ENCODE measurements at regions of chr5 and their contacts with region 1.

Region 1: GRCh38 chr5:71782771-71783770 is 64.0 kb downstream of the CARTPT start:
- DNase-seq: peak; percentile 63 to 91
- H3K4me3 ChIP-seq: no peak overlapping the region
- H3K4me1 ChIP-seq: peaks cover 2% of the 10 kb centered on the region; the same call in 1 of the 2 replicates
- H3K27me3 ChIP-seq: no peaks in the 10 kb centered on the region

Region 2: GRCh38 chr5:71569748-71570509 is 213.1 kb before region 1 on chr5:
- in situ Hi-C with region 1: no loop called
- DNase-seq: no peak
- H3K4me3 ChIP-seq: no peak overlapping the region
- H3K4me1 ChIP-seq: no peaks in the 10 kb centered on the region
- H3K27me3 ChIP-seq: no peaks in the 10 kb centered on the region

Region 3: GRCh38 chr5:72018146-72018803 is 235.2 kb after region 1 on chr5:
- in situ Hi-C with region 1: loop called (anchors 25 kb)
- DNase-seq: peak; percentile 43 to 74
- H3K4me3 ChIP-seq: no peak overlapping the region
- H3K4me1 ChIP-seq: peaks cover 11% of the 10 kb centered on the region
- H3K27me3 ChIP-seq: no peaks in the 10 kb centered on the region

Region 4: DNA sequence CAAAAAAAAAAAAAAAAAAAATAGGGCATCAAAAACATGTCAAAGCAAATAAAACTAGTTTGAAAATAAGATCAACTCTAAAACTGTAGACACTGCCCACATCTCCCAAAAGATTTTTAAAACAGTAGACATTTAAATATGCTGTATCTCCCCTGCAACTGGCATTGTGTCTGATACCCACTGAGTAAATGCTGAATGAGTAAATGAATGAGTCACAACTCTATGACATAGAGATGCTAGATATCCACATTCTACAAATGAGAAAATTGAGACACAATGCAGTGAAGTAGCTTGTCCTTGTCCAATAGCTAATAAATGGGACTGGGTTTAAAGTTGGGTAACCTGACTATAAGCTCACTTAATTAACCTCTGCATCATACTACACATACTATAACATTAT is 310.1 kb after region 1 on chr5:
- in situ Hi-C with region 1: no loop called
- DNase-seq: no peak
- H3K4me3 ChIP-seq: no peak overlapping the region
- H3K4me1 ChIP-seq: no peaks in the 10 kb centered on the region
- H3K27me3 ChIP-seq: no peaks in the 10 kb centered on the region

Region 5: DNA sequence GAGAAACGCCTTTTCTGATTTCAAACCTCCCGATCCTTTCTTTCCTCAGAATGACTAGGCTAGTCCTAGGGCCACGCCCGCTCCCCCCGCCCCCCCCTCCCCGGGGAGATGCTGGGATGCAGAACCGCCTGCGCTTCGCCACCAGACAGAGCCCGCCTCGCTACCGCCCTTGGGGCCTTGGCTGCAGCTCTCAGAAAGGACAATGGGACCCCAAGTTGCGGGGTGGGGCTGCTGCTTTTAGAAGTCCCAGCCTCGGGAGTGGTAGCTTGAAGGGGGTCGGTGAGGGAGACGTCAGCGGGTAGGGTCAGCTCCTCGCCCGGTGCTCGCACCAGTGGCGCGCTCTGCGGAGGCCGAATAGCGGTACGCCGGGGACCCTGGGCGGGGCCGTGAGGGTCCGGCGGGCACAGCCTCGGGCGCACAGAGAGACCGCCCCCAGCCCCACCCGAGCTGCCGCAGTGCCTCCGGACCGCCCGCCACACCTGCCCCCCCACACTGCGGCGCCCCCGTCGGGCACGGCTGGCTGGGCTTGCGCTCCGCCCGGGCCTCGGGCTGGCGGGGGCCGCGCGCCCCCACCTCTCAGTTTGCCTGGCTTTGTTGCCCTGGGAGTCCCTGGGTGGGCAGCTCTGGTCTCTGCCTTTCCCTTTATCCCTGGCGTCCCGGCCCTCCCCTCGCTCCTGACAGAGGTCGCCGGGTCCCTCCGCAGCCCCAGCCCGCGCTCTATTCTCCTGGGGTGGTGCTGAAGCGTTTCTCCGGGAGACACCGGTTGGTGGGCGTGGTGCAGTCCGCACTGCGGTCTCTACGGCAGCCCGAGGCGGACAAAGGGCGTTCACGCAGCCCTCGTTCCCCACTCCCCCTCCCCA is 325.4 kb after region 1 on chr5:
- in situ Hi-C with region 1: loop called (anchors 25 kb)
- DNase-seq: peak; percentile 67 to 92
- H3K4me3 ChIP-seq: peak overlapping the region; percentile 75
- H3K4me1 ChIP-seq: peaks cover 30% of the 10 kb centered on the region
- H3K27me3 ChIP-seq: no peaks in the 10 kb centered on the region

Region 6: DNA sequence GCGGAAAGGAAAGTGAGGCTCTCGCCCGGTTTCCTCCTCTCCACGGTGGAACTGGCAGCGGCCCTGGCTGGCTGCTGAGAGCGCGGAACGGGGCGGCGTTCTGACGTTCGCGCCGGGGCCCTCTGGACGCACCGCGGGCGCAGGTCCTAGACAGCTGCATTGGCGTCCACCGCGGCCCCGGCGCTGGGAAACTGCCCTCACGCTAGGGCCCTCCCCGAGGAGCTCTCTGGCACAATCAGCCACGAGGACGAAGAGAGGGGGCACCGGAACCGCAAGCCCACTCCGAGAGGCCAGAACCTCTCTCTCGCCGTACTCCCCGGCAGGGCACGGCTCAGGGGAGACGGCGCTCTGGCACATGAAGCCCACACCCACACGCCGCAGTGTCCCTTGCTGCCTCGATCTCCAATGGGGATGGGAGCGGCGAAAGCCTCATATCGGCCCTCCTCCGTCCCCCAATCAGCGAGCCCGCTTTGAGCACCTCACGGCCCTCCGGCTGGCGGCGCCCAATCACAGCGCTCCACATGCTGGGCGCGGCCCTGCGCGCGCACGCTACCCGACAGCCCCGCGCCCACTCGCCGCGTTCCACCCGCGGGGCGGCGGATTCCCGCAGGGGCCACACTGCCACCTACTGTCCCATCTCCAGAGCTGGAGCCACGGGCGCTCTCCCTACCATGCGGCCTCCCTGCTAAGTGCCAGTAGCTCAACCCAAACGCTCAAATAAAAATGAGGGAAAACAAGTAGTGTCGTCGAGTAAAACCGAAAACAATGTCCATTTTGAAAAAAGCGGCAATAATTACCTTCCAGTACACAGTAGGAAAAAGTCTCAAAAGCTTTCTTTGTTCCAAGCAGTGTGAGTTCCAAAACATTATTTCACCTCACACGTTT is 525.1 kb after region 1 on chr5:
- in situ Hi-C with region 1: loop called (anchors 5 kb)
- DNase-seq: peak; percentile 92 to 97
- H3K4me3 ChIP-seq: peak overlapping the region; percentile 66
- H3K4me1 ChIP-seq: peaks cover 33% of the 10 kb centered on the region
- H3K27me3 ChIP-seq: no peaks in the 10 kb centered on the region

Measured in HAP-1 (cell line).